Activated T-helper 2 cell treated with anti-CD3 and anti-CD28 coated beads, Interferon-gamma antibody, Interleukin-2, Interleukin-4, amounts not matched to agents 10 μg/mL and 5 μg/mL and 100 μg/mL, durations not matched to agents 14 hours and 24 hours and 36 hours (primary cell): ENCODE measurements at regions of chr4 and their contacts with region 1.

Region 1: GRCh38 chr4:71184195-71184781 is 154.5 kb upstream of the SLC4A4 start:
- DNase-seq: peak; percentile 11
- H3K4me3 Mint-ChIP-seq: no peak overlapping the region
- H3K27ac Mint-ChIP-seq: no peak overlapping the region
- H3K4me1 Mint-ChIP-seq: peaks cover 22% of the 10 kb centered on the region
- H3K27me3 Mint-ChIP-seq: peaks cover 41% of the 10 kb centered on the region

Region 2: GRCh38 chr4:70158576-70158975 is 1025.7 kb before region 1 on chr4:
- intact Hi-C with region 1: no loop called
- DNase-seq: no peak
- H3K4me3 Mint-ChIP-seq: no peak overlapping the region
- H3K27ac Mint-ChIP-seq: no peak overlapping the region
- H3K4me1 Mint-ChIP-seq: no peaks in the 10 kb centered on the region
- H3K27me3 Mint-ChIP-seq: no peaks in the 10 kb centered on the region

Region 3: GRCh38 chr4:70651864-70652506 is 532.3 kb before region 1 on chr4:
- intact Hi-C with region 1: loop called (anchors 10 kb)
- DNase-seq: no peak
- H3K4me3 Mint-ChIP-seq: no peak overlapping the region
- H3K27ac Mint-ChIP-seq: no peak overlapping the region
- H3K4me1 Mint-ChIP-seq: peaks cover 3% of the 10 kb centered on the region
- H3K27me3 Mint-ChIP-seq: peaks cover 24% of the 10 kb centered on the region

Region 4: GRCh38 chr4:70993181-70994068 is 190.9 kb before region 1 on chr4 and contains the start of gene DCK:
- intact Hi-C with region 1: loop called (anchors 10 kb)
- DNase-seq: peak; percentile 83
- H3K4me3 Mint-ChIP-seq: peak within 1 kb of the TSS; percentile 99
- H3K27ac Mint-ChIP-seq: peak within 1 kb of the TSS; percentile 93
- H3K4me1 Mint-ChIP-seq: peaks cover 39% of the 10 kb centered on the region
- H3K27me3 Mint-ChIP-seq: no peaks in the 10 kb centered on the region
- total RNA-seq, gene DCK: 35.1 and 35.3 TPM in 2 replicates

Region 5: GRCh38 chr4:71221510-71222466 is 37.5 kb after region 1 on chr4:
- intact Hi-C with region 1: no loop called
- DNase-seq: no peak
- H3K4me3 Mint-ChIP-seq: no peak overlapping the region
- H3K27ac Mint-ChIP-seq: no peak overlapping the region
- H3K4me1 Mint-ChIP-seq: no peaks in the 10 kb centered on the region
- H3K27me3 Mint-ChIP-seq: peaks cover 2% of the 10 kb centered on the region

Region 6: GRCh38 chr4:71713611-71714203 is 529.4 kb after region 1 on chr4:
- intact Hi-C with region 1: loop called (anchors 10 kb)
- DNase-seq: no peak
- H3K4me3 Mint-ChIP-seq: no peak overlapping the region
- H3K27ac Mint-ChIP-seq: no peak overlapping the region
- H3K4me1 Mint-ChIP-seq: no peaks in the 10 kb centered on the region
- H3K27me3 Mint-ChIP-seq: peaks cover 1% of the 10 kb centered on the region